B cell (primary cell): ENCODE measurements at regions of chr12 and their contacts with region 1.

Region 1: DNA sequence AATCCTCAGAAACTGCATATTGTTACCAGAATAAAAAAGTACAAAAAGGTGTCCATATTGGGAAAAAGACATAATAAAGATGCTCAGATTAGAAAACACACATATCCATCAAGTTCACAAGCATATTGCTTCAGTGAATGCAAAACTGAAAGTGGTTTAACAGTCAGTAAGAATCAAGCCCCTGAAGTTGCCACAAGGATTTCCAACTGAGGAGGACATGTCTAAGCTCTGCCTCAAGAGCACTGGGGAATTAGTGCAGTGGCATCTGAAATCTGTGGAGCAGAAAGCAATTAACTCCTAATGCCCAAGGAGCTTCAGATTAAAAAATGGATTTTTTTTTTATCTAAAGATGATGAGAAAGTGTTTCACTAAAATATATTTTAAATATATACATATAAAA is 113.2 kb downstream of the DENND5B start:
- DNase-seq: no peak
- ATAC-seq: no peak
- H3K4me3 ChIP-seq: no peak overlapping the region
- H3K4me3 Mint-ChIP-seq: no peak overlapping the region
- H3K27ac ChIP-seq: peak overlapping the region in 1 of 2 donors; percentile 31
- H3K27ac Mint-ChIP-seq: peak overlapping the region; percentile 12
- H3K4me1 ChIP-seq: peaks cover 31 to 42% of the 10 kb centered on the region in 2 donors
- H3K4me1 Mint-ChIP-seq: peaks cover 59% of the 10 kb centered on the region
- H3K27me3 ChIP-seq: no peaks in the 10 kb centered on the region
- H3K27me3 Mint-ChIP-seq: no peaks in the 10 kb centered on the region
- CTCF ChIP-seq: no peak

Region 2: GRCh38 chr12:31205054-31205453 is 272.6 kb before region 1 on chr12:
- CTCF ChIA-PET with region 1: no interaction called
- POLR2A ChIA-PET with region 1: no interaction called
- intact Hi-C with region 1: no loop called
- DNase-seq: peak; percentile 74
- ATAC-seq: peak; percentile 90
- H3K4me3 ChIP-seq: no peak overlapping the region
- H3K4me3 Mint-ChIP-seq: peak overlapping the region; percentile 29
- H3K27ac ChIP-seq: no peak overlapping the region
- H3K27ac Mint-ChIP-seq: no peak overlapping the region
- H3K4me1 ChIP-seq: peaks cover 7 to 18% of the 10 kb centered on the region in 2 donors
- H3K4me1 Mint-ChIP-seq: peaks cover 14% of the 10 kb centered on the region
- H3K27me3 ChIP-seq: peaks cover 0 to 4% (median 2%) of the 10 kb centered on the region in 4 experiments
- H3K27me3 Mint-ChIP-seq: peaks cover 18% of the 10 kb centered on the region
- CTCF ChIP-seq: no peak

Region 3: DNA sequence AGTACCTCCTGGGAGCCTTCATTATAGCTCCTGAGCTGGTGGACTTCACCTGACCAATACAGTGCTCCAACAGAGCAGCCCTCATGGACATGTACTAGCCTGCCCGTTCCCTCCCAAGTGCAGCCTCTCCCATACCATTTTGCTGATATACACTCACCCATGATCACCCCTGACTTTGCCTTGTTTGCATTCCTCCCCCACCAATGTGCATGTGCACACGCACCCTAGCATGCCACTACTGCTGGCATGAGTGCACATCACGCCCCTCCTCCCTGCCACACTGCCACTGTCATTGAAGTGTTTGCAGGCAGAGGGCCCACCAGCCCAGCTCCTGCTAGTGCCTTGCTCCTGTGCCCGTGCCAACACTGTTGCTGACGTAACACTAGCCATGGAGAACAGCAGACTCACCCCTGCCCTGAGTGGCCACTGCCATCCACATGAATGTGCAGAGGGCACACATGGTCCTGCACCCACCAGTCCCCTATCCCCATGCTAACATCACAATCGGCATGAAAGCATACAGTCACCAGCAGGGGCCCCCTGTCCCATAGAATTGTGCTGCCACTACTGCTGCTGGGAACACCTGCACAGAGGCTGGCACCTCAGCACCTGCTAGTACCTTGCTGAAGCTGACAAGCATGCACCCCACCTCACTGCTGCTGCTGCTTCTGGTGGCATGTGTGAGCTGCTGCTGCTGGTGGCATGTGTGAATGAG is 262.0 kb before region 1 on chr12:
- CTCF ChIA-PET with region 1: no interaction called
- POLR2A ChIA-PET with region 1: no interaction called
- intact Hi-C with region 1: no loop called
- DNase-seq: no peak
- ATAC-seq: no peak
- H3K4me3 ChIP-seq: no peak overlapping the region
- H3K4me3 Mint-ChIP-seq: no peak overlapping the region
- H3K27ac ChIP-seq: no peak overlapping the region
- H3K27ac Mint-ChIP-seq: no peak overlapping the region
- H3K4me1 ChIP-seq: no peaks in the 10 kb centered on the region
- H3K4me1 Mint-ChIP-seq: no peaks in the 10 kb centered on the region
- H3K27me3 ChIP-seq: no peaks in the 10 kb centered on the region
- H3K27me3 Mint-ChIP-seq: peaks cover 27% of the 10 kb centered on the region
- CTCF ChIP-seq: no peak

Region 4: DNA sequence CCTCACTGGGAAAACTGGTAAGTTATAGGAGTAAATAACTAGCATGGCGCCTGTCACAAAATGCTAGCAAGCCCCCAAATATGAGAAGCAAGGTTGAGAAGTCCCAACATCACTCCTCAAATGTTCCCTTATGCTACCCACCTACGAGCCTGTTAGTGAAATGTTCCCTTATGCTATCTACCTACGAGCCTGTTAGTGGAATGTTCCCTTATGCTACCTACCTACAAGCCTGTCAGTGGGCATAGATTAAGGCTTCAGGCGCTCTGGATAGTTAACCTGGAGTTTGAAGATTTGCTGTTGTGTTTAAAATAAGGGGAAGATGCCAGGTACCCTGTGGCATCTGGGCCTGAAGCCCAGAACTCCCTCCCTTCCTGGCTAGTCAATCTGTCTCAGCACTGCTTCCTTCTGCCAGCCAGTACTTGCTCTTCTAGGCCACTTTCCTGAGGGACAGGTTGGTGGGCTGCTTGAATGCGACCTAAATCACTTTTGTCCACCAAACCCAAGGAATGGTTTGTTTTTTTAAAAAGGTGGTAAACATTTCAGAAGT is 84.6 kb before region 1 on chr12:
- CTCF ChIA-PET with region 1: no interaction called
- POLR2A ChIA-PET with region 1: interaction called, 10 read pairs
- intact Hi-C with region 1: no loop called
- DNase-seq: no peak
- ATAC-seq: no peak
- H3K4me3 ChIP-seq: no peak overlapping the region
- H3K4me3 Mint-ChIP-seq: no peak overlapping the region
- H3K27ac ChIP-seq: no peak overlapping the region
- H3K27ac Mint-ChIP-seq: no peak overlapping the region
- H3K4me1 ChIP-seq: no peaks in the 10 kb centered on the region
- H3K4me1 Mint-ChIP-seq: no peaks in the 10 kb centered on the region
- H3K27me3 ChIP-seq: no peaks in the 10 kb centered on the region
- H3K27me3 Mint-ChIP-seq: no peaks in the 10 kb centered on the region
- CTCF ChIP-seq: no peak

Region 5: DNA sequence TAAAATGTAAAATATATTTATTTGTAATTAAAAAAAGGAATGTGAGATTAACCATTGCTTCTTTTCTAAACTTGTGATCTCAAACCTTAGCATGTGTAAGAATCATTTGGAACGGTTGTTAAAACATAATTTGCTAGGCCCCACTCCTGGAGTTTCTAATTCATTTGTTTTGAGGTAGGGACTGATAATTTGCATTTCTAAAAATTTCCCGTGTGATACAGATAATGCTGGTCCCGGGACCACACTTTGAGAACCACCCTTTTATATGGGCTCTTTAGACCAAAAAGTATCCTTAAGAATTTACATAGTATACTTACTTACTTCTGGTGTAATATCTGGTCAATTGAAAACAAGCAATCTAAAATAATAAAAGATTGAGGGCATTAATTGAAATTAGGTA is 1972.8 kb after region 1 on chr12:
- CTCF ChIA-PET with region 1: no interaction called
- POLR2A ChIA-PET with region 1: no interaction called
- intact Hi-C with region 1: no loop called
- DNase-seq: no peak
- ATAC-seq: no peak
- H3K4me3 ChIP-seq: no peak overlapping the region
- H3K4me3 Mint-ChIP-seq: no peak overlapping the region
- H3K27ac ChIP-seq: no peak overlapping the region
- H3K27ac Mint-ChIP-seq: no peak overlapping the region
- H3K4me1 ChIP-seq: no peaks in the 10 kb centered on the region
- H3K4me1 Mint-ChIP-seq: no peaks in the 10 kb centered on the region
- H3K27me3 ChIP-seq: no peaks in the 10 kb centered on the region
- H3K27me3 Mint-ChIP-seq: no peaks in the 10 kb centered on the region
- CTCF ChIP-seq: no peak